Left cardiac atrium (tissue), 4 donors: ENCODE measurements at regions of chr15 and their contacts with region 1.

Region 1: DNA sequence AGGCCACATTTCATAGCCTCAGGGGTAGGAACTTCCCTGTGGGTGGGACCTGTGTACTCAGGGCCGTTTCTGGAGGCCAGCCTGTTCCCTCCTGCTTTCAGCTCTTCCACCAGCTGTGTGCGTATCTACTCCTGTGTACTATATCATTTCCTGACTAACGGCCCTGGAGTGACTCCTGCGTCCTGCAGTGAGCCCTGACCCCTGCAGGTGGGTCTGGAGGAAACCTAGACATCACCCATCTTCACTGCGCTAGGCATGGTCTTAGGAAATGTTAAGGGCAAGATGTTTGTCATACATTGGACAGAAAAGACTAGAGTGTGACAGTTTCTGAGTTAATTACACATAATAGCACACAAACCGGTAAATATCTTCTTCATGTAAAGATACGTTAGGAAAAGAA is 297.3 kb downstream of the GABRB3 start:
- DNase-seq: no peak
- ATAC-seq: peak in 1 of 2 donors; percentile 40

Region 2: GRCh38 chr15:26157081-26157480 is 318.5 kb before region 1 on chr15:
- intact Hi-C with region 1: no loop called
- DNase-seq: no peak
- ATAC-seq: peak in 1 of 2 donors; percentile 77

Region 3: GRCh38 chr15:26179906-26180305 is 295.6 kb before region 1 on chr15:
- intact Hi-C with region 1: loop called in 1 of 2 experiments (anchors 10 kb)
- DNase-seq: peak; percentile 31
- ATAC-seq: peak; percentile 74 to 90

Region 4: DNA sequence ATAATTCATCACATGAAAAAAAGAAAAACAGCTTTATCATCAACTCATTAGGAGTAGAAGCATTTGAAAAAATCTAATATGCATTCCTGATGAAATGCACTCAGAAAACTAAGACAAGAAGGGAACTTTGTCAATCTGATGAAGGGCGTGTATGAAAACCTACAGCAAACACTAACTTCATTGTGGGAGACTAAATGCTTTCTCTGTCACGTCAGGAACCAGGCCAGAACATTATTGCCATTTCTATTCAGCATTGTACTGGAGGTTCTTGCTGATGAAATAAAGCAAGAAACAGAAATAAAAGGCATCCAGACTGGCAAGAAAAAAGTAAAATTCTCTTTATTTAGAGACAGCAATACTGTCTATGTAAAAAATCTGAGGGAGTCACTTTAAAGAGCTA is 62.1 kb after region 1 on chr15:
- intact Hi-C with region 1: no loop called
- DNase-seq: no peak
- ATAC-seq: no peak